Activated T-helper 1 cell treated with anti-CD3 and anti-CD28 coated beads, Interleukin-12 subunit alpha, Interleukin-12 subunit beta, Interleukin-2, Interleukin-4 antibody, amounts not matched to agents 30 ng/mL and 10 ng/mL and 1 ng/mL, durations not matched to agents 14 hours and 24 hours and 36 hours (primary cell): ENCODE measurements at regions of chr2 and their contacts with region 1.

Region 1: DNA sequence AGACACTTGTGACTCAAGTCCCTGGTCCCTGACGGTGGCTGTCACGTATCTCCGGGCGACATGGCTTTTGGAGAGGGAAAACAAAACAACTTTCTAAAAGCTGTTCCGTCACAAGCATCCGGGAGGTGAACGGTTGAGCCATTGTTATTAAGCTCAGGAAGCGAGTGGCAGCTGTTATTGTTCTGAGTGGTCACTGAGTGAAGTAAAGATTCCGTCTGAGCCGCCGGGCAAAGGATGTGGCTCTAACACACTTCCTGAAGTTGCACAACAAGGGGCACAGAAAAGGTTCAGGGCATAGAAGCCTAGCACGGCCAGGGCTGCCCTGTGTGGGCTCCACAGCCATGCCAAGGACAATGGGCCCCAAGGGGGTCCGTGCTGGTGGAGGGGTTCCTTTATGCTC is 24.3 kb downstream of the INPP5D start:
- DNase-seq: no peak
- H3K4me3 Mint-ChIP-seq: peak overlapping the region; percentile 82
- H3K27ac Mint-ChIP-seq: peak overlapping the region; percentile 91
- H3K4me1 Mint-ChIP-seq: peaks cover 83% of the 10 kb centered on the region
- H3K27me3 Mint-ChIP-seq: no peaks in the 10 kb centered on the region

Region 2: GRCh38 chr2:232697100-232697865 is 387.2 kb before region 1 on chr2 and contains the start of gene GIGYF2:
- intact Hi-C with region 1: loop called (anchors 5 kb)
- DNase-seq: peak; percentile 90
- H3K4me3 Mint-ChIP-seq: peak within 1 kb of the TSS; percentile 99
- H3K27ac Mint-ChIP-seq: peak within 1 kb of the TSS; percentile 87
- H3K4me1 Mint-ChIP-seq: peaks cover 30% of the 10 kb centered on the region
- H3K27me3 Mint-ChIP-seq: no peaks in the 10 kb centered on the region
- total RNA-seq, gene GIGYF2: 71.1 and 74.6 TPM in 2 replicates

Region 3: GRCh38 chr2:233061591-233062450 is 22.7 kb before region 1 on chr2:
- intact Hi-C with region 1: loop called (anchors 1 kb)
- DNase-seq: no peak
- H3K4me3 Mint-ChIP-seq: peak overlapping the region; percentile 97
- H3K27ac Mint-ChIP-seq: peak overlapping the region; percentile 99
- H3K4me1 Mint-ChIP-seq: peaks cover 51% of the 10 kb centered on the region
- H3K27me3 Mint-ChIP-seq: no peaks in the 10 kb centered on the region

Region 4: GRCh38 chr2:233129351-233129987 is 45.0 kb after region 1 on chr2:
- intact Hi-C with region 1: no loop called
- DNase-seq: no peak
- H3K4me3 Mint-ChIP-seq: no peak overlapping the region
- H3K27ac Mint-ChIP-seq: no peak overlapping the region
- H3K4me1 Mint-ChIP-seq: peaks cover 25% of the 10 kb centered on the region
- H3K27me3 Mint-ChIP-seq: no peaks in the 10 kb centered on the region

Region 5: DNA sequence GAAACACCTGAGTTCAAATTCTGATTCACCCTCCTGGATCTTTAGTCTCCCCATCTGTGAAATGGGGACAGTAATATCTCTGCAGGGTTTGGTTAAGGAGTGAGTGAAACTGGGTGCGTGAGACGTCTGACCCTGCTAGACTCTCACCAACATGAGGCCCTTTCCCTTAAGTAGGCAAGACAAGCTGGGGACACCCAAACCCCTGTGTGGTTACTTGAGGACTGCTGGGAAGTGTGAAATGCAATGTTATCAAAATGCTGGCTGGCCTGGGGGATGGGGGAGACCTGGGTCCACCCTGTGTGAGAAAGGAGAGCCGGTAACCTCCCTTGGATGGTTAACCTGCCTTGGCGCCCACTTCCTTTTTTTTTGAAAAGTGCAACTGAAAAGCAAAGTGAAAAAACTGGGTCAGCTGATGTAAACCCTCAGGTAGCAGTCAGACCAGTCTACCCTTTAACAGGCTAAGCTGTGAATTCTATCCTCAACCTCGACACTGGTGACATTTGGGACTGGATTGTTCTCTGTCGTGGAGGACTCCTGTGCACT is 57.9 kb after region 1 on chr2:
- intact Hi-C with region 1: loop called (anchors 5 kb)
- DNase-seq: peak; percentile 16
- H3K4me3 Mint-ChIP-seq: no peak overlapping the region
- H3K27ac Mint-ChIP-seq: peak overlapping the region; percentile 73
- H3K4me1 Mint-ChIP-seq: peaks cover 41% of the 10 kb centered on the region
- H3K27me3 Mint-ChIP-seq: no peaks in the 10 kb centered on the region

Region 6: GRCh38 chr2:233267516-233268245 is 183.2 kb after region 1 on chr2:
- intact Hi-C with region 1: loop called (anchors 2 kb)
- DNase-seq: peak; percentile 83
- H3K4me3 Mint-ChIP-seq: peak overlapping the region; percentile 54
- H3K27ac Mint-ChIP-seq: peak overlapping the region; percentile 95
- H3K4me1 Mint-ChIP-seq: peaks cover 76% of the 10 kb centered on the region
- H3K27me3 Mint-ChIP-seq: no peaks in the 10 kb centered on the region